ENCODE measurements at regions of chr19 and their contacts with region 1.

Region 1: DNA sequence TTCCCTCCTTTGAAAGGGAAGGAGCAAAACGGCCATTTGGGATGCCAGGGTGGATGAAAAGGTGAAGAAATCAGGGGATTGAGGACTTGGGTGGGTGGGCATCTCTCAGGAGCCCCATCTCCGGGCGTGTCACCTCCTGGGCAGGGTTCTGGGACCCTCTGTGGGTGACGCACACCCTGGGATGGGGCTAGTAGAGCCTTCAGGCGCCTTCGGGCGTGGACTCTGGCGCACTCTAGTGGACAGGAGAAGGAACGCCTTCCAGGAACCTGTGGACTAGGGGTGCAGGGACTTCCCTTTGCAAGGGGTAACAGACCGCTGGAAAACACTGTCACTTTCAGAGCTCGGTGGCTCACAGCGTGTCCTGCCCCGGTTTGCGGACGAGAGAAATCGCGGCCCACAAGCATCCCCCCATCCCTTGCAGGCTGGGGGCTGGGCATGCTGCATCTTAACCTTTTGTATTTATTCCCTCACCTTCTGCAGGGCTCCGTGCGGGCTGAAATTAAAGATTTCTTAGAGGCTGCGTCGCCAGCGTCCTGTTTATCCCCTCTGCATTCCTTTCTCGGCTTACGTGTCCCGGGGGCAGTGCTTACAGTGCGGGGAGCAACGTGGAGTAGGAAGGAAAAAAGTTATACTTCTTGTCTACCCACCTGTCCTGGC is 15.2 kb upstream of the S1PR4 start:
- DNase-seq: peak; percentile 65 to 84 (median 79)
- ATAC-seq: peak; percentile 83 to 89
- H3K4me3 ChIP-seq: no peak overlapping the region
- H3K27ac ChIP-seq: no peak overlapping the region
- H3K4me1 ChIP-seq: no peaks in the 10 kb centered on the region
- H3K27me3 ChIP-seq: no peaks in the 10 kb centered on the region

Region 2: GRCh38 chr19:2950286-2951124 is 212.9 kb before region 1 on chr19:
- intact Hi-C with region 1: loop called in 3 of 4 experiments (anchors 5 to 10 kb)
- DNase-seq: peak; percentile 100
- ATAC-seq: peak; percentile 93 to 97
- H3K4me3 ChIP-seq: peak overlapping the region; percentile 72
- H3K27ac ChIP-seq: peak overlapping the region; percentile 95
- H3K4me1 ChIP-seq: peaks cover 6% of the 10 kb centered on the region
- H3K27me3 ChIP-seq: no peaks in the 10 kb centered on the region

Region 3: GRCh38 chr19:2962045-2962561 is 201.3 kb before region 1 on chr19:
- intact Hi-C with region 1: loop called in 3 of 4 experiments (anchors 5 to 10 kb)
- DNase-seq: no peak
- ATAC-seq: peak; percentile 76 to 85
- H3K4me3 ChIP-seq: no peak overlapping the region
- H3K27ac ChIP-seq: no peak overlapping the region
- H3K4me1 ChIP-seq: no peaks in the 10 kb centered on the region
- H3K27me3 ChIP-seq: no peaks in the 10 kb centered on the region

Region 4: GRCh38 chr19:3075895-3076431 is 87.4 kb before region 1 on chr19:
- intact Hi-C with region 1: loop called in 2 of 4 experiments (anchors 5 to 10 kb)
- DNase-seq: peak; percentile 44 to 84 (median 83)
- ATAC-seq: peak; percentile 59 to 67
- H3K4me3 ChIP-seq: no peak overlapping the region
- H3K27ac ChIP-seq: no peak overlapping the region
- H3K4me1 ChIP-seq: no peaks in the 10 kb centered on the region
- H3K27me3 ChIP-seq: no peaks in the 10 kb centered on the region

Region 5: DNA sequence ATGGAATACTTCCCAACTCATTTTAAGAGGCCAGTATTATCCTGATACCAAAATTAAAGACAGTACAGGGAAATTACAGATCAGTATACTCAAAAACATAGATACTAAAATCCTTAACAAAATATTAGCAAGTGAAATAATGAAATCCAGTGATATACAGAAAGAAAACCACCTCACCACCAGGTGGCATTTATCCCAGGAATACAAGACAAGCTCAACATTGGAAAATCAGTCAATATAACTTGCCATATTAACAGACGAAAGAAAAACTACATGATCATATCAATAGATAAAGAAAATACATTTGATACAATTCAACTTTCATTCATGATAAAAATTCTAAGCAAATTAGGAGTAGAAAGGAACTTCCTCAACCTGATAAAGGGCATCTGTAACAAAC is 34.2 kb before region 1 on chr19:
- intact Hi-C with region 1: loop called in 1 of 4 experiments (anchors 2 kb)
- DNase-seq: no peak
- ATAC-seq: no peak
- H3K4me3 ChIP-seq: no peak overlapping the region
- H3K27ac ChIP-seq: no peak overlapping the region
- H3K4me1 ChIP-seq: no peaks in the 10 kb centered on the region
- H3K27me3 ChIP-seq: no peaks in the 10 kb centered on the region